OCI-LY7 (cell line): ENCODE measurements at regions of chr16 and their contacts with region 1.

Region 1: GRCh38 chr16:69709456-69710084 is 16.8 kb downstream of the NQO1 start:
- DNase-seq: peak; percentile 78
- H3K4me3 ChIP-seq: no peak overlapping the region
- H3K27ac ChIP-seq: no peak overlapping the region
- H3K4me1 ChIP-seq: no peaks in the 10 kb centered on the region
- CTCF ChIP-seq: peak; percentile 97

Region 2: DNA sequence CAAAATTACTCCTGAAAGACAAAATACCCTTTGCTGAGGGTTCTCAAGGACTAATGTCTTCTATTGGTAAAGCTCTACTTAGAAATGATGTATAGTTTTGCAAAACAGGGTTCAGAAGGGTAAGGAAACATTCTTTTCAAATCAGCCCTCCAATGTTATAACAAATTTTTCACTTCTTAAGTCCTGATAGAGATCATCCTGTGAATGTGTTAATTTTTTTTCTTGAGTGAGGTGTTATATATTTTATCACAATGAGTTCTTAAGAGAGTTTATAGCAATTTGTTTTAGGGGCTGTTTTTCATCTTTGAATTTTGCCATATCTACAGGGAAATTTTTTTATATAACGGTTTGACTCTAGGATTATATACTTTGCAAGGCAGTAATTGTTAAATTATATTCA is 255.6 kb before region 1 on chr16:
- CTCF ChIA-PET with region 1: no interaction called
- POLR2A ChIA-PET with region 1: no interaction called
- intact Hi-C with region 1: no loop called
- DNase-seq: no peak
- H3K4me3 ChIP-seq: no peak overlapping the region
- H3K27ac ChIP-seq: no peak overlapping the region
- H3K4me1 ChIP-seq: no peaks in the 10 kb centered on the region
- CTCF ChIP-seq: no peak

Region 3: GRCh38 chr16:69610356-69610755 is 99.2 kb before region 1 on chr16:
- CTCF ChIA-PET with region 1: no interaction called
- POLR2A ChIA-PET with region 1: no interaction called
- intact Hi-C with region 1: no loop called
- DNase-seq: no peak
- H3K4me3 ChIP-seq: no peak overlapping the region
- H3K27ac ChIP-seq: no peak overlapping the region
- H3K4me1 ChIP-seq: peaks cover 2% of the 10 kb centered on the region
- CTCF ChIP-seq: no peak

Region 4: DNA sequence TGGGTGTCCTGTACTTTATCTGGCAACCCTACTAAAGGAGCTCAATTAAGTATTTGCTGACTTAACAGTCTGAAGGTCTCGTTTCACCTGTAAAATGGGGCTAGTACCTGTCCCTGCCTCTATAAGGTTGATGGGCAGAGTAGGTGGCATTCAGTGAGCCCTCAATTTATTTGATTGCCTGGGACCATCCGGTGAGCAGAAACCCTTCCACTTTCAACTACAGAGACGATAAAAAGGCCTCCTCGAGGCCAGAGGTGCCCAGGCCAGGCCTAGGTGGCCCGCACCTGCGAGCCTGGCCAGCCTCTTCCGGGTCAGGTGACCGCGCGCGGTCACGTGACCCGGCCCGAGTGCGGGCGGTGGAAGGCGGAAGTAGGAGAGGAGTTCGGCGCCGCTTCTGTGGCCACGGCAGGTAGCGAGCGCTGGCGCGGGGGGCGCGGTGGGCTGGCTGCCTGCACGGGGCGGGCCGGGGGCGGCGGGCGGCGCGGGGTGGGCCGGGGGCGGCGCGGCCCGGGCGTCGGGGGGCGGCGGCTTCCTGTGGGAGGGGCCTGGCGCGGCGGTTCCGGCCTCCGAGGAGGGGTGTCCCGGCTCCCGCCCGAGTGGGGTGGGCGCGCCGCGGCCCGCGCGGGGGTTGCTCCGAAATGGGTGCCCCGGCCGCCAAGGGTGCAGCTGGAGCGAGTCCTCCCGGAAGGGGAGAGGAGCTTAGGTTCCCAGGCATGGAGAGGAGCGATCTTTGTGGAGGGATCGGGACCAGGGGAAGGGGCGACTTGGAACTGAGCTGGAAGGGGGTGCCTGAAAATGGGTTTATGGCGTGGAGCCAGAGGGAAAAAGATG is 52.6 kb after region 1 on chr16 and contains the start of gene WWP2:
- CTCF ChIA-PET with region 1: no interaction called
- POLR2A ChIA-PET with region 1: no interaction called
- intact Hi-C with region 1: no loop called
- DNase-seq: peak; percentile 90
- H3K4me3 ChIP-seq: peak within 1 kb of the TSS; percentile 96
- H3K27ac ChIP-seq: peak within 1 kb of the TSS; percentile 56
- H3K4me1 ChIP-seq: peaks cover 17% of the 10 kb centered on the region
- CTCF ChIP-seq: no peak
- total RNA-seq, gene WWP2: 20.8 and 30.3 TPM in 2 replicates

Region 5: DNA sequence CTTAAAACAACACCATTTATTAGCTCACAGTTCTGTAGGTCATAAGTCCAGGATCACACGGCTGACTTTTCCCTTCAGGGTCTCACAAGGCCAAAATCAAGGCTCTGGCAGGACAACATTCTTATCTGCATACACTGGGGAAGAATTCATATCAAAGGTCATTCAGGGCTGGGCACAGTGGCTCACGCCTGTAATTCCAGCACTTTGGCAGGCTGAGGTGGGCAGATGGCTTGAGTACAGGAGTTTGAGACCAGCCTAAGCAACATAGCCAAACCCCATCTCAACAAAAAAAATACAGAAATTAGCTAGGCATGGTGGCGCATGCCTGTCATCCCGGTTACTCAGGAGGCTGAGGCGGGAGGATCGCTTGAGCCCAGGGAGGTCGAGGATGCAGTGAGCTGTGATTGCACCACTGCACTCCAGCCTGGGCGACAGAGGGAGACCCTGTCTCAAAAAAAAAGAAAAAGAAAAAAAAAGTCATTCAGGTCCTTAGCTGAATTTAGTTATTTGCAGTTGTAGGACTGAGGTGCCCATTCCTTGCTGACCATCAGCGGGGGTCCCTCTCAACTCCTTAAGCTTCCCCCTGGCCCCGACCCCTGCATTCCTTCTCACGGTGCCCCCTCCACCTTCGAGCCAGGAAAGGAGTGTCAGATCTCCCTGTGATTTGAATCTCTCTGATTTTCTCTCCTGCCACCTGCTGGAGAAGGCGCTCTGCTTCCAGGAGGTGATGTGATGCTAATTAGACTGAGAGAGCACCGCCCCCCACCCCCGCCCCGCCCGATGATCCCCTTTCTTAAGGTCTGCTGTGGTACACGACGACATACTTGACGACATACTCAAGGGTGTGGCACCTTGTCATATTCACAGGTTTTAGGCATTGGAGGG is 149.8 kb after region 1 on chr16:
- CTCF ChIA-PET with region 1: no interaction called
- POLR2A ChIA-PET with region 1: no interaction called
- intact Hi-C with region 1: loop called (anchors 5 kb)
- DNase-seq: peak; percentile 21
- H3K4me3 ChIP-seq: no peak overlapping the region
- H3K27ac ChIP-seq: no peak overlapping the region
- H3K4me1 ChIP-seq: no peaks in the 10 kb centered on the region
- CTCF ChIP-seq: peak; percentile 56